H1 (cell line): ENCODE measurements at regions of chr2 and their contacts with region 1.

Region 1: GRCh38 chr2:95076784-95077529 is 44.7 kb downstream of the MRPS5 start:
- DNase-seq: peak; percentile 65 to 93
- H3K4me3 ChIP-seq: peak overlapping the region; percentile 39 to 68 (median 65)
- H3K27ac ChIP-seq: no peak overlapping the region
- H3K4me1 ChIP-seq: peaks cover 0 to 8% (median 4%) of the 10 kb centered on the region in 4 experiments; a peak in 5 of 7 replicates
- H3K27me3 ChIP-seq: peaks cover 0 to 15% (median 12%) of the 10 kb centered on the region in 4 experiments; a peak in 4 of 7 replicates
- CTCF ChIP-seq: peak; percentile 73 to 90 (median 87)
- EP300 ChIP-seq: no peak
- POLR2A ChIP-seq: no peak
- RAD21 ChIP-seq: peak; percentile 69 to 70

Region 2: DNA sequence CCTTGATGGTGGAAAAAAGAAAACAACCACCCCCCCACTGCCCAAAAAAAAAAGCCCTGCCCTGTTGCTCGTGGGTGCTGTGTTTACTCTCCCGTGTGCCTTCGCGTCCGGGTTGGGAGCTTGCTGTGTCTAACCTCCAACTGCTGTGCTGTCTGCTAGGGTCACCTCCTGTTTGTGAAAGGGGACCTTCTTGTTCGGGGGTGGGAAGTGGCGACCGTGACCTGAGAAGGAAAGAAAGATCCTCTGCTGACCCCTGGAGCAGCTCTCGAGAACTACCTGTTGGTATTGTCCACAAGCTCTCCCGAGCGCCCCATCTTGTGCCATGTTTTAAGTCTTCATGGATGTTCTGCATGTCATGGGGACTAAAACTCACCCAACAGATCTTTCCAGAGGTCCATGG is 23.4 kb before region 1 on chr2:
- CTCF ChIA-PET with region 1: interaction called, 10 read pairs
- POLR2A ChIA-PET with region 1: no interaction called
- DNase-seq: peak; percentile 31 to 61
- H3K4me3 ChIP-seq: no peak overlapping the region
- H3K27ac ChIP-seq: no peak overlapping the region
- H3K4me1 ChIP-seq: no peaks in the 10 kb centered on the region; a peak in 1 of 7 replicates
- H3K27me3 ChIP-seq: no peaks in the 10 kb centered on the region
- CTCF ChIP-seq: peak in 2 of 3 experiments; percentile 6 to 17; a peak in 2 of 4 replicates
- EP300 ChIP-seq: no peak
- POLR2A ChIP-seq: no peak
- RAD21 ChIP-seq: peak in 1 of 2 experiments; percentile 24; a peak in 2 of 4 replicates

Region 3: GRCh38 chr2:95091885-95092555 is 15.1 kb after region 1 on chr2:
- CTCF ChIA-PET with region 1: interaction called, 10 read pairs
- POLR2A ChIA-PET with region 1: interaction called, 3 read pairs
- DNase-seq: no peak
- H3K4me3 ChIP-seq: no peak overlapping the region
- H3K27ac ChIP-seq: no peak overlapping the region
- H3K4me1 ChIP-seq: peaks cover 0 to 2% (median 0%) of the 10 kb centered on the region in 4 experiments; a peak in 1 of 7 replicates
- H3K27me3 ChIP-seq: no peaks in the 10 kb centered on the region
- CTCF ChIP-seq: no peak
- EP300 ChIP-seq: no peak
- POLR2A ChIP-seq: no peak
- RAD21 ChIP-seq: no peak

Region 4: GRCh38 chr2:95106081-95106480 is 29.1 kb after region 1 on chr2:
- CTCF ChIA-PET with region 1: interaction called, 13 read pairs
- POLR2A ChIA-PET with region 1: interaction called, 4 read pairs
- DNase-seq: no peak
- H3K4me3 ChIP-seq: no peak overlapping the region
- H3K27ac ChIP-seq: no peak overlapping the region
- H3K4me1 ChIP-seq: no peaks in the 10 kb centered on the region
- H3K27me3 ChIP-seq: no peaks in the 10 kb centered on the region
- CTCF ChIP-seq: no peak
- EP300 ChIP-seq: no peak
- POLR2A ChIP-seq: no peak
- RAD21 ChIP-seq: no peak

Region 5: GRCh38 chr2:95115418-95115817 is 38.5 kb after region 1 on chr2:
- CTCF ChIA-PET with region 1: interaction called, 40 read pairs
- POLR2A ChIA-PET with region 1: interaction called, 13 read pairs
- DNase-seq: peak in 1 of 2 experiments; percentile 63
- H3K4me3 ChIP-seq: no peak overlapping the region
- H3K27ac ChIP-seq: no peak overlapping the region
- H3K4me1 ChIP-seq: no peaks in the 10 kb centered on the region; a peak in 1 of 7 replicates
- H3K27me3 ChIP-seq: no peaks in the 10 kb centered on the region
- CTCF ChIP-seq: peak; percentile 82 to 93 (median 84)
- EP300 ChIP-seq: no peak
- POLR2A ChIP-seq: no peak
- RAD21 ChIP-seq: peak; percentile 85 to 89

Region 6: GRCh38 chr2:95121407-95122196 is 44.6 kb after region 1 on chr2 and contains the start of gene MRPS5:
- CTCF ChIA-PET with region 1: interaction called, 40 read pairs
- POLR2A ChIA-PET with region 1: interaction called, 13 read pairs
- DNase-seq: peak in 1 of 2 experiments; percentile 95
- H3K4me3 ChIP-seq: peak within 1 kb of the TSS; percentile 91 to 98 (median 96)
- H3K27ac ChIP-seq: peak within 1 kb of the TSS; percentile 97
- H3K4me1 ChIP-seq: peaks cover 0 to 3% (median under 1%) of the 10 kb centered on the region in 4 experiments; a peak in 2 of 7 replicates
- H3K27me3 ChIP-seq: no peaks in the 10 kb centered on the region; a peak in 1 of 7 replicates
- CTCF ChIP-seq: no peak
- EP300 ChIP-seq: no peak
- POLR2A ChIP-seq: peak; percentile 61 to 77
- RAD21 ChIP-seq: no peak; a peak in 1 of 4 replicates
- total RNA-seq, gene MRPS5: 52.8 and 53.0 TPM in 2 replicates

Region 7: GRCh38 chr2:95143838-95144237 is 66.9 kb after region 1 on chr2:
- CTCF ChIA-PET with region 1: no interaction called
- POLR2A ChIA-PET with region 1: no interaction called
- DNase-seq: no peak
- H3K4me3 ChIP-seq: no peak overlapping the region
- H3K27ac ChIP-seq: no peak overlapping the region
- H3K4me1 ChIP-seq: no peaks in the 10 kb centered on the region
- H3K27me3 ChIP-seq: peaks cover 0 to 1% (median 0%) of the 10 kb centered on the region in 4 experiments; a peak in 1 of 7 replicates
- CTCF ChIP-seq: no peak
- EP300 ChIP-seq: no peak
- POLR2A ChIP-seq: no peak
- RAD21 ChIP-seq: no peak

Region 8: DNA sequence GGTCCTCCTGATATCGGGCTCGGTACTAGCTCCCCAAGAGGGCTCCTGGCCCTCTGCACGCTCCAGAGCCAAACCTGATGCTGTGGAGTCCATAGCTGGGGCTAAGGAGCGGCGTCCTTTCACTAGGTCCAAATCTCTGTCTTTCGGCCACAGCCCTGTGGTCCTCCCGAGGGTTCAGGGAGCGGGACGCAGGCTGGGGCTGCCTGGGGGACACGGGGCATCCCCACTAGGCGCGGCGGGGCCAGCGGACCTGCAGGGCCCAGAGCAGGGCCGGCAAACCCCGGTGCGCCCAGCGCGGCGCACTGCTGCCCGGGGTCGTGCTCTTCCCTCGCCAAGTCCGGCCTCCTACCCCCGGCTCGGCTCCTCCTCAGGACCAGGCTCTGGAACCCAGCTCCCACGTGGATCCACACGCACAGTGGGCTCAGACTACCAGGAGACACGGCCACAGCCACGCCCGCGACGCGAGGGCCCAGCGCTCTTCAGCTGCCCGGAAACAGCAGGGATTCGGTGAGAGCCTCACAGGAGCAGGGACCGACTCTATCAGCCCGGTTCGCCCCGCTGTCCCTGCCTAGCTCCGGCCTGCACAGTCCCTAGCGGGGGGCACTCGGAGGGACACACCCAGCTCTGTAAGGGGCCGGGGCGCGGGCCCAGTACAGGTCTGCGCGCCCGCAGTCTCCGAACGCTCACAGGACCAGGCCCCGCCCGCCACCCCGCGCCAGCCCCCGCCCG is 82.1 kb after region 1 on chr2:
- CTCF ChIA-PET with region 1: interaction called, 10 read pairs
- POLR2A ChIA-PET with region 1: no interaction called
- DNase-seq: peak in 1 of 2 experiments; percentile 61
- H3K4me3 ChIP-seq: peak overlapping the region; percentile 59 to 84 (median 74)
- H3K27ac ChIP-seq: no peak overlapping the region
- H3K4me1 ChIP-seq: peaks cover 0 to 3% (median 0%) of the 10 kb centered on the region in 4 experiments; a peak in 2 of 7 replicates
- H3K27me3 ChIP-seq: peaks cover 0 to 12% (median 9%) of the 10 kb centered on the region in 4 experiments; a peak in 4 of 7 replicates
- CTCF ChIP-seq: no peak
- EP300 ChIP-seq: no peak
- POLR2A ChIP-seq: no peak
- RAD21 ChIP-seq: no peak

Region 9: GRCh38 chr2:95225658-95226057 is 148.7 kb after region 1 on chr2:
- CTCF ChIA-PET with region 1: no interaction called
- POLR2A ChIA-PET with region 1: no interaction called
- DNase-seq: no peak
- H3K4me3 ChIP-seq: no peak overlapping the region
- H3K27ac ChIP-seq: no peak overlapping the region
- H3K4me1 ChIP-seq: no peaks in the 10 kb centered on the region
- H3K27me3 ChIP-seq: no peaks in the 10 kb centered on the region
- CTCF ChIP-seq: no peak
- EP300 ChIP-seq: no peak
- POLR2A ChIP-seq: no peak
- RAD21 ChIP-seq: no peak